ENCODE measurements at regions of chr3 and their contacts with region 1.

Region 1: GRCh38 chr3:34683851-34684250 is 885.4 kb downstream of the PDCD6IP start:
- DNase-seq: peak; percentile 81
- ATAC-seq: peak; percentile 89

Region 2: GRCh38 chr3:33883538-33883950 is 800.3 kb before region 1 on chr3:
- intact Hi-C with region 1: loop called (anchors 5 kb)
- DNase-seq: no peak
- ATAC-seq: peak; percentile 52

Region 3: GRCh38 chr3:34260271-34261006 is 423.4 kb before region 1 on chr3:
- intact Hi-C with region 1: loop called (anchors 5 kb)
- DNase-seq: peak; percentile 46
- ATAC-seq: peak; percentile 76

Measured in Right ventricle myocardium superior (tissue), 1 donor.